Head of caudate nucleus (tissue), 42 donors: ENCODE measurements at regions of chr19 and their contacts with region 1.

Region 1: GRCh38 chr19:51097166-51097738 is 11.0 kb downstream of the CTU1 start:
- DNase-seq: peak; percentile 35 to 86 (median 69)

Region 2: GRCh38 chr19:50933640-50934039 is 163.6 kb before region 1 on chr19:
- intact Hi-C with region 1: loop called (anchors 10 kb)
- DNase-seq: no peak

Region 3: GRCh38 chr19:51016798-51017683 is 80.2 kb before region 1 on chr19:
- intact Hi-C with region 1: loop called (anchors 10 kb)
- DNase-seq: peak; percentile 1 to 94 (median 76)